Activated naive CD4-positive, alpha-beta T cell treated with anti-CD3 and anti-CD28 coated beads, Interleukin-2, amount 10 ng/mL, durations not matched to agents 7 days and 5 days (primary cell): ENCODE measurements at regions of chr9 and their contacts with region 1.

Region 1: GRCh38 chr9:120985810-120986222 is 59.2 kb upstream of the TRAF1 start:
- DNase-seq: no peak
- H3K4me3 Mint-ChIP-seq: no peak overlapping the region
- H3K27ac Mint-ChIP-seq: no peak overlapping the region
- H3K4me1 Mint-ChIP-seq: no peaks in the 10 kb centered on the region
- H3K27me3 Mint-ChIP-seq: peaks cover 8% of the 10 kb centered on the region

Region 2: GRCh38 chr9:120960001-120960400 is 25.8 kb before region 1 on chr9:
- CTCF ChIA-PET with region 1: interaction called, 10 read pairs
- DNase-seq: no peak
- H3K4me3 Mint-ChIP-seq: no peak overlapping the region
- H3K27ac Mint-ChIP-seq: no peak overlapping the region
- H3K4me1 Mint-ChIP-seq: no peaks in the 10 kb centered on the region
- H3K27me3 Mint-ChIP-seq: peaks cover 9% of the 10 kb centered on the region

Region 3: GRCh38 chr9:121074635-121075385 is 89.0 kb after region 1 on chr9 and contains the start of gene CNTRL:
- CTCF ChIA-PET with region 1: interaction called, 14 read pairs
- DNase-seq: peak; percentile 94
- H3K4me3 Mint-ChIP-seq: peak within 1 kb of the TSS; percentile 95
- H3K27ac Mint-ChIP-seq: peak within 1 kb of the TSS; percentile 90
- H3K4me1 Mint-ChIP-seq: peaks cover 64% of the 10 kb centered on the region
- H3K27me3 Mint-ChIP-seq: no peaks in the 10 kb centered on the region